ENCODE measurements at regions of chr3 and their contacts with region 1.

Region 1: DNA sequence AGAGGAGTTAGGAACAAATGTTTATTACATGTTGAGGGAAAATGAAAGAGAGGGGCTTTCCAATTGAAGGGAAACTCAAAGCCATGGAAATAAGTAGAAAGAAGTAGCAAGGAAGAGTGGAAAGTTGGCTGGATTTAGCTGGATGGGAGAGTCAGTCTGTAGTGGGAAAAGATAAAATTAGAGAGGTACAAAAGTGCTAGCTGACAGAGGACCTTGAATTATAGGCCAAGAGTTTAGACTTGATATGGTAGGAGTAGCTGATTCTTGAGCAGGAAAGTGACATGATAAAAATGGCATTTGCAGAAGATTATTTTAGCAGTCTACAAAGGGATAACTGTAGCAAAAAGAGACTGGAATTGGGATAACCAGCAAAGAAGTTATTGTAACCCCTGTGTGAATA is 425.8 kb downstream of the ROBO1 start:
- DNase-seq: no peak
- ATAC-seq: no peak
- H3K4me3 ChIP-seq: no peak overlapping the region
- H3K4me3 Mint-ChIP-seq: no peak overlapping the region
- H3K27ac ChIP-seq: no peak overlapping the region
- H3K27ac Mint-ChIP-seq: no peak overlapping the region
- H3K4me1 ChIP-seq: no peaks in the 10 kb centered on the region
- H3K4me1 Mint-ChIP-seq: no peaks in the 10 kb centered on the region
- H3K27me3 ChIP-seq: no peaks in the 10 kb centered on the region
- H3K27me3 Mint-ChIP-seq: no peaks in the 10 kb centered on the region
- CTCF ChIP-seq: no peak

Region 2: DNA sequence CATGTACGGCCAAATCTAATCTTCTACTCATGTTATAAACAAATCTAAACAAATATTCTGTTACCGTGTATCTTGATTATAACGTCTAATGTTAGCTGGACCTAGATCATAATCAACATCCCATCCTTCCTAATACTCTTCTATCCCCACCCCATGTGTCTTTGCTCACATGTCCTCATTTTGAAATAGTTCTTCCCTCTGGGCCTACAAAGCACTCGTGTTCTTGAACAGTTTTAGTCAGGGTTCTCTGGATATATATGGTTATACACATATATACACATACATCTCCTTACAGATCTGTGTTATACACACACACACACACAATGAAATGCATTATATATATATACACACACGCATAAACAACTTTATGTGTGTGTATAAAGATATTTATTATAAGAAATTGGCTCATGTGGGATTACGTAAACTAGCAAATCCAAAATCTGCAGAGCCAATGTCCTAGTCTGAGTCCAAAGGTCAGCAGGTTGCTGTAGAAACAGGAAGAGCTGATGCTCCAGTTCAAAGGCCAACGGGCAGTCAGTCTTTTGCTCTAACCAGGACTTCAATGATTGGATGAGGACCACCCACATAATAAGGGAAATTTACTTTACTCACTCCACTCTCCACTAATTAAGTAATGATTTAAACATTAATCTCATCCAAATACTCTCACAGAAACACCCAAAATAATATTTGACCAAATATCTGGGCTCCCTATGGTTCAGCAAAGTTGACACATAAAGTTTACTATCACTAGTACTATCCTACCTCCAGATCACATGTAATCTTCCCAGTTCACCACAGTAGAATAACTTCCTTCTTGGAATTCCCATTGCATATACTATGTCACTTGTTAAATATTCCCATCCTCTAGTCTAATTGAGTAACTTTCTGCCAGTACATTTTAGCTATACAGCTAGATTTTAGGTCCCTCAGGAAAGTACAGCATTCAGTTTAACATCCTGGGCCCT is 24.1 kb before region 1 on chr3:
- CTCF ChIA-PET with region 1: no interaction called
- POLR2A ChIA-PET with region 1: no interaction called
- intact Hi-C with region 1: no loop called
- DNase-seq: no peak
- ATAC-seq: no peak
- H3K4me3 ChIP-seq: no peak overlapping the region
- H3K4me3 Mint-ChIP-seq: no peak overlapping the region
- H3K27ac ChIP-seq: no peak overlapping the region
- H3K27ac Mint-ChIP-seq: no peak overlapping the region
- H3K4me1 ChIP-seq: no peaks in the 10 kb centered on the region
- H3K4me1 Mint-ChIP-seq: no peaks in the 10 kb centered on the region
- H3K27me3 ChIP-seq: no peaks in the 10 kb centered on the region
- H3K27me3 Mint-ChIP-seq: no peaks in the 10 kb centered on the region
- CTCF ChIP-seq: no peak

Region 3: GRCh38 chr3:79329154-79329553 is 12.8 kb before region 1 on chr3:
- CTCF ChIA-PET with region 1: no interaction called
- POLR2A ChIA-PET with region 1: no interaction called
- intact Hi-C with region 1: no loop called
- DNase-seq: no peak
- ATAC-seq: no peak
- H3K4me3 ChIP-seq: no peak overlapping the region
- H3K4me3 Mint-ChIP-seq: no peak overlapping the region
- H3K27ac ChIP-seq: no peak overlapping the region
- H3K27ac Mint-ChIP-seq: no peak overlapping the region
- H3K4me1 ChIP-seq: no peaks in the 10 kb centered on the region
- H3K4me1 Mint-ChIP-seq: no peaks in the 10 kb centered on the region
- H3K27me3 ChIP-seq: no peaks in the 10 kb centered on the region
- H3K27me3 Mint-ChIP-seq: no peaks in the 10 kb centered on the region
- CTCF ChIP-seq: no peak

Region 4: DNA sequence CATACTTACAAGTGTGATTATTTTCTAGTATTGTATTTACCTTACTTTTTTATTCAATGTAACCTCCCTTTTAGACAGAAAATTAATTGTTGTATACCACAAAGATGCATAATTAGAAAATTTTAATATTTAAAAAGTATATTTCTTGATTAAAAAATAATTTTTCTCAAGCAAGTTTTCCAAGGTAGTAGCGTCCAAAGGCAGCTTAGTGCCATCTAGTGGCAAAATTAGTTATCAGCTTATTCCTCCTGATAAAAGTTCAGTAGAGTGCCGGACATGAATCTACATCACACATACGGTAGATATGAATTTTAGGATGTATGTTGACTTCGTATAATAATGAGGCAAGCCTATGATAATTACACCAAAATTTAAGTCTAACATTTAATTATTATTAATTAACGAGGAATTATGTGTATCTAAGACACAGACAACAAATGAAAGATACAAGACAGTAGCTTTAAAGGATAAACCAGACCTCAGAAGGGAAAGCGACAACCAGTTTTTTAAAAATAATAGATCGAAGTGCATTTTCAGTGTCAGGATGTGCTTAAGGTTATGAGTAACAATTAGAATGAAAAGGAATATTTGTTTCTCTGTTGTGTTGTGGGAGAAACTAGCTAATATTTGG is 19.9 kb after region 1 on chr3:
- CTCF ChIA-PET with region 1: no interaction called
- POLR2A ChIA-PET with region 1: no interaction called
- intact Hi-C with region 1: loop called in 1 of 2 experiments (anchors 2 kb)
- DNase-seq: no peak
- ATAC-seq: no peak
- H3K4me3 ChIP-seq: no peak overlapping the region
- H3K4me3 Mint-ChIP-seq: no peak overlapping the region
- H3K27ac ChIP-seq: no peak overlapping the region
- H3K27ac Mint-ChIP-seq: no peak overlapping the region
- H3K4me1 ChIP-seq: no peaks in the 10 kb centered on the region
- H3K4me1 Mint-ChIP-seq: no peaks in the 10 kb centered on the region
- H3K27me3 ChIP-seq: no peaks in the 10 kb centered on the region
- H3K27me3 Mint-ChIP-seq: no peaks in the 10 kb centered on the region
- CTCF ChIP-seq: no peak

Region 5: GRCh38 chr3:79467721-79468120 is 125.8 kb after region 1 on chr3:
- CTCF ChIA-PET with region 1: no interaction called
- POLR2A ChIA-PET with region 1: no interaction called
- intact Hi-C with region 1: no loop called
- DNase-seq: no peak
- ATAC-seq: no peak
- H3K4me3 ChIP-seq: no peak overlapping the region
- H3K4me3 Mint-ChIP-seq: no peak overlapping the region
- H3K27ac ChIP-seq: no peak overlapping the region
- H3K27ac Mint-ChIP-seq: no peak overlapping the region
- H3K4me1 ChIP-seq: no peaks in the 10 kb centered on the region
- H3K4me1 Mint-ChIP-seq: no peaks in the 10 kb centered on the region
- H3K27me3 ChIP-seq: no peaks in the 10 kb centered on the region
- H3K27me3 Mint-ChIP-seq: no peaks in the 10 kb centered on the region
- CTCF ChIP-seq: no peak